ENCODE measurements at regions of chr11 and their contacts with region 1.

Region 1: DNA sequence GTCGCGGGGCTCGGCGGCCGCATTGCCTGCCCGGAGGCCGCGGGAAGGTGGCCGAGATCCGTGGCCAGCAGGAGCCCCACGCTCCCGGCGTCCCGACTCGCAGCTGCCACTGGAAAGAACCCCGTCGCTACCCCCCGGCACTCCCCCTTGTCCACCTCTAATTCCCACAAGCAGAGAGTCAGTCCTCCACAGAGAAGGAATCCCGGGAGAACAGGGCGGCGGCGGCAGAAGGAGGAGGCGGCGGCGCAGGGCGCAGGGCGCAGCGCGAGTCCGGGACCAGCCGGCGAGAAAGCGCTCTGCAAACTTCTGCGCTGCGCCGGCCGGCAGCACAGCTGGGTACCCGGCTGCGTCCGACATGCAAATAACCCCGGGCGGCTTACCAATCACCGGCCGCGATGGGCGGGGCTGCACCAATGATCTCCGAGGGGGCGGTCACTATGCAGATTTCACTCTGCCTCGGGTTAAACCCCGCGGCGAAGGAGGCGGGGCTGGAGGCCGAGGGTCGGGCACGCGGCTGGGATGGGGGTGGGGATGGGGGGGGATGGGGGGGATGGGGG is at the start of gene ABTB2:
- DNase-seq: peak; percentile 89 to 98 (median 98)
- H3K4me3 ChIP-seq: peak within 1 kb of the TSS; percentile 50 to 92 (median 73)
- H3K27ac ChIP-seq: peak within 1 kb of the TSS in 46 of 59 donors; percentile 13 to 82 (median 60)
- H3K27me3 ChIP-seq: peaks cover 0 to 3% (median 0%) of the 10 kb centered on the region in 45 donors
- CTCF ChIP-seq: peak in 18 of 56 donors; percentile 7 to 48 (median 26)
- total RNA-seq, gene ABTB2: 3.4 to 16.8 (median 6.8) TPM

Region 2: DNA sequence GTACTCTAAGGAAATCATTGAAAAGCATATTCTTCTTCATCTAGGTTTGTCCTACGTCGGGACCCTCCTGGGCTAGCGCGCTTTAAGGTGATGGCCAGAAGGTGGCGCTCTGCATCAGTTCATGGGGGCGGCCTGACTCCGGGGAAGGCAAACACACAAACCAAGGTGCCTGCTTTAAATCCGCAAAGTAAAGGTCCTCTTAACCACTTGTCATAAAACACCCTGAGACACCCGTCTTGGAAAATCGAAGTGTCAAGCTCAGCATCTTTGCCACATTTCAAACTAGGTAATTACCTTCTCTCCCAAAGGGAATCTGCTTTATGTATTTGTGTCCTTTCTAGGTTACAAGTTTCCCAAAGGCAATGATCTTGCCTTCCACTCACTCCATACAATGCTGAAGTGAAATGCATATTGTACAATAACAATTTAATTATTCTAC is 499.8 kb before region 1 on chr11:
- intact Hi-C with region 1: loop called (anchors 2 to 10 kb)
- DNase-seq: peak in 9 of 10 donors; percentile 48 to 78 (median 65)
- H3K4me3 ChIP-seq: peak overlapping the region in 1 of 59 donors; percentile 4
- H3K27ac ChIP-seq: peak overlapping the region in 1 of 59 donors; percentile 32
- H3K27me3 ChIP-seq: peaks cover 0 to 7% (median 0%) of the 10 kb centered on the region in 45 donors
- CTCF ChIP-seq: peak; percentile 64 to 96 (median 90)

Region 3: DNA sequence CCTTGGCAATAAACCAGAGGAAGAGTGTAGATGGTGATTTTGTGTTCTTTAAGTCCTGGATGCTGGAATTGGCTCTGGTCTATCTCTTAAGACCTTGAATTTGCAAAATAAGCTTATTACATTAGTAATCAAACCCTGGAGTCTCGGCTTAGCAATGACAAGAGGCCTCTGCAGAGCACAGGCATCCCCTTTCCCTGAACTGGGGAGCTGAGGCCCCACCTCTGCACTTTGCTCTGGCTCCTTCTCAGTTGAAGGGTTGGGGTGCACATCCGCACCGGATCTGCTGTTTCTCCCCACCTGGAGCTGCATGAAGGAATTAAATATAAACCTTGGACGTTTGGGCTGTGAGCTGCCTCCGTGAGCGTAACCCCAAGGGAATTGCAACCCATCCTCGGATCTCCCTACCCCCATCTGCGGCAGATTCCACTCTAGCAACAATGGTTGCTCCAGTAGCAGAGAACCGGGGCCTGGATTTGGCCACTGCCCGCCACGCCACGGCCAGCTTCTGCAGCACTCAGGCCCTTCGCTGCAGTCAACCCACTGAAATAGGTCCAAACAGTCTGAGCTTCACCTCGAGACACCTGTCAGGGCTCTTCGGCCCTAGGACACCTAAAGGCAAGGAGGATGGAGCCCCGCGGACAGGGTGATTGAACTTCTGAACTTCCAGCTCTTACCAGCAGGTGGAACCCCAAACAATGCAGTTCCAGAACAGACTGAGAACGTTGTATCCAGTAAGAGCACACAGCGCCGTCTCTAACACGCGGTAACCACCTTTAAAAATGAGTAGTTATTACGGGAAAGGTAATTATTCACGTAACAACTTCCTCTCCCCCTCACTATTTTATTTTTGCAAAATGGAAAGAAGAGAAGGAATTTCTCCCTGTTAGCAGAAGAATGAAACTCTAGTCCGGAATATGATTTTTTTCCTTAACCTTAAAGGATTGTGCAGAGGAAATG is 361.0 kb before region 1 on chr11:
- intact Hi-C with region 1: loop called (anchors 1 to 2 kb)
- DNase-seq: peak; percentile 31 to 72 (median 60)
- H3K4me3 ChIP-seq: peak overlapping the region in 45 of 59 donors; percentile 1 to 50 (median 30)
- H3K27ac ChIP-seq: peak overlapping the region in 17 of 59 donors; percentile 7 to 65 (median 41)
- H3K27me3 ChIP-seq: peaks cover 0 to 3% (median 0%) of the 10 kb centered on the region in 45 donors
- CTCF ChIP-seq: peak; percentile 54 to 93 (median 87)

Region 4: DNA sequence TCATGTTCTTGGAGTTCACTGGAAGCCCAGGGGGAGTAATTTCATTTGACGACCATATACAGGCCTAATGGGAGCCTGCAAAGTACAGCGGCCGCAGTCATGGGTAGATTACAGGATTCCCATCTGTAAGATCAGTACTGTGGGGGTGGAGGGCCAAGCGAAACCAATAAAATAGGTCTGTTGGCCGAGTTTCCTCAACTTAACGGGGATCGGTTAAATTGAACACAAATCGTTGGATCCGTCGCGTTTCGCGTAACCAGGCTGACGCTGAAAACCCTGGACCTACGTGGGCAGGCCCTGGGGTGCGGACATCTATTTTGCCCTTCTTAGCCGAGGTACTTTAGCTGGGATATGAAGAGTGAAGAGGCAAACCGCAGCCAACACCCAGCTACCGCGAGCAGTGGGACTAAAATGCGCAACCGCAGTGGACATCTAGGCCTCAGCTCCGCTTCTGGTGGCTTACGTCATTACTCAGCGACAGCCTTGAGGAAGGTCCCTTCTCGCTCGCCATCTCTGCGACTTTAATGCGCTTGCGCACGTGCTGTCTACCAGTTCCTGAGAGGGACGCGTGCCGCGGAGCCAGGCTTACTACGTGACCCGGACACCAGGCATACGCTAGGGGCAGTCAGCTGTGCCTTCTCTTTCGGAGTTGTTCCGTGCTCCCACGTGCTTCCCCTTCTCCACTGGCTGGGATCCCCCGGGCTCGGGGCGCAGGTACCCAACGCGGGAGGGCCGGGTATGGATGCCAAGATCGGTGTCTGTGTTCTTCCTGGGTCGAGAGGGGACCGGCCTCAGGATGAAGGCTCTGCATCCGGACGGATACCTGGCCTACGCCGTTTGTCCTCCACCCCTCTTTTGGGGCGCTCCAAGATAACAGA is 252.5 kb before region 1 on chr11 and contains the start of gene NAT10:
- intact Hi-C with region 1: loop called (anchors 5 kb)
- DNase-seq: peak; percentile 90 to 96 (median 94)
- H3K4me3 ChIP-seq: peak within 1 kb of the TSS; percentile 61 to 100 (median 95)
- H3K27ac ChIP-seq: peak within 1 kb of the TSS; percentile 78 to 99 (median 94)
- H3K27me3 ChIP-seq: no peaks in the 10 kb centered on the region
- CTCF ChIP-seq: peak in 37 of 56 donors; percentile 6 to 51 (median 27)
- total RNA-seq, gene NAT10: 41.9 to 72.5 (median 56.0) TPM

Region 5: DNA sequence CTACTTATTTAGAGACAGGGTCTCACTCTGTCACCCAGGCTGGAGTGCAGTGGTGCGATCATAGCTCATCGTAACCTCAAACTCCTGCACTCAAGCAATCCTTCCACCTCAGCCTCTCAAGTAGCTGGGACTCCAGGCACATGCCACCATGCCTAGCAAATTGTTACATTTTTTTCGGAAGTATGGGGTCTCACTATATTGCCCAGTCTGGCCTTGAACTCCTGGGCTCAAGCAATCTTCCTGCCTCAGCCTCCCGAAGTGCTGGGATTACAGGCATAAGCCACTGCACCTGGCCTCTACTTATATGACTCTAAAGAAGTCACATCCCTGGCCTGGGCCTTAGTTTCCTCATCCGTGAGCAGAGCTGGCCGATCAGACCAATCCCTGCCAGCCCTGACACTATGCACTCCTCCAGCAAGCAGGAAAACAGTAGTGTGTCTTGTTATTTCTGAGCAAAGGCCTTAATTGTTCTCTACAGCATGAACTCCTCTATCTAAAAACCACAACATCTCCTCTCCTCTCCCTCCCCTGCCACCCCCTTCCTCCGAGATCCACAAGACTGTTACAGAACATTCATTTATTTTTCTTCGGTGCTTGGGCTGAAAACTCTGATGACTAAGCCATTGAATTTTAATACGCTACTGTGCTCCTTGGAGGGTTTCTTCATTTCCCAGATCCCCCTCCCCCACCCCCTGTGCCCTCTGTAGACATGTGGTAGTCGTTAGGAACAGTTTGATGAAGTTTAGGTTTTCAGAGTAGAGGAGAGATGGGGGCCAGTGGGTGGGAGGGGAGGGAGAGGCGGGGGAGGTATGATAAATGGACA is 91.5 kb before region 1 on chr11:
- intact Hi-C with region 1: loop called (anchors 1 to 2 kb)
- DNase-seq: peak in 6 of 10 donors; percentile 27 to 58 (median 49)
- H3K4me3 ChIP-seq: peak overlapping the region in 14 of 59 donors; percentile 1 to 19 (median 7)
- H3K27ac ChIP-seq: peak overlapping the region in 54 of 59 donors; percentile 8 to 89 (median 69)
- H3K27me3 ChIP-seq: no peaks in the 10 kb centered on the region
- CTCF ChIP-seq: no peak

Region 6: DNA sequence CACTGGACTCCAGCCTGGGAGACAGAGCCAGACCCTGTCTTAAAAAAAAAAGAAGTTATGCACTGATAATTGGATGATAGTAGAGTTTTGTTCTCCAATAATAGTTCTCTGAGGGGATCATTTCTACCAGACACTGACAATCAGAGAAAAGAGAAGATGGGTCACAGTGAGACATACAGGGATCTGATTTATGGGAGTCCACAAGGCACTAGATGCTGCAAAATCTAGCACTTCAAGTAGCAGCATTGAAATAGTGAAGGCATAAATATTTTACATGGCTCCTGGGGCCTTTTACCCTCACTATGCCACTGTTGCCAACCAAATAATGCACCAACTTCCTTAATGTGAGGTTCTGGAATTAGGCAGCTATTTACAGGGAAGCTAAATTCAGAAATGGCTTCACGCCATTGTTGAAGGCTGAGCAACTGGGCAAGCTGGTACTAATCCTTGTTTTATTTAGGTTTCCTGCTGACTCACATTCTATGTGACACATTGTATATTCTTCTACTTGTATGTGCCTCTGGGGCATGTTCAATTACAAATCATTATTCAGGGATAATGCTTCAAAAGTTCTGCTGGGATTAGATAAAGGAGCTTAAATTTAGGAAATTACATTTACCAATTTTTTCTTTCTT is 38.3 kb after region 1 on chr11:
- intact Hi-C with region 1: no loop called
- DNase-seq: no peak
- H3K4me3 ChIP-seq: no peak overlapping the region
- H3K27ac ChIP-seq: no peak overlapping the region
- H3K27me3 ChIP-seq: no peaks in the 10 kb centered on the region
- CTCF ChIP-seq: no peak